ENCODE measurements at regions of chr12 and their contacts with region 1.

Region 1: DNA sequence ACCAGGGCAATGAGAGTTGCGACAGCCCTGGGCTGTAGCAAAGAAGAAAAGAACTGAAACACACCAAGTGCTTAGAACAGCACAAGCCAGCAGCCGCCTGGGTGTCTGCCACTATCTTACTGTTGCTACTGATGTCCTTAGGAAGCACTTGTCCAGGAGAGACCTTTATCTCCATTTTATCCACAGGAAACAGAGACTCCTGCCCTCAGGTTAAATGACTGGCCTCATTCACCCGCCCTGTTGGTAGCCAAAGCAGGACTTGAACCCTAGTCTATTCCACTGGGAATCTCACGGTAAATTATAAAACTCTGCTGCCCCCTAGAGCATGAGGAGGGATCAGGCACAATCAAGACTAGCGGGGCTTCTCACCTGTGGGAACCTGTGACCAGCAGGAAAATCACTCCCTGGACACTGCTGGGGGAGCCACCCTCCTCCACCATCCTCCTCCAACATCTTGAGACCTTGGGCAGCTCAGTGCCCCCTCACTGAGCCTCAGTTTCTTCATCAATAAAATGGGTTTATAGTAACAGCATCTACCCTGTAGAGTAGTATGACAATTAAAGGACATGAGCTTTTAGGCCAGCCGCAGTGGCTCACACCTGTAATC is 20.5 kb upstream of the TESC start:
- DNase-seq: peak; percentile 67
- CTCF ChIP-seq: peak; percentile 82

Region 2: GRCh38 chr12:116266168-116266601 is 853.5 kb before region 1 on chr12:
- in situ Hi-C with region 1: loop called (anchors 25 kb)
- DNase-seq: no peak
- CTCF ChIP-seq: no peak

Region 3: GRCh38 chr12:116703214-116703795 is 416.4 kb before region 1 on chr12:
- in situ Hi-C with region 1: loop called (anchors 25 kb)
- DNase-seq: peak; percentile 65
- CTCF ChIP-seq: peak; percentile 91

Region 4: GRCh38 chr12:116832353-116832752 is 287.3 kb before region 1 on chr12:
- in situ Hi-C with region 1: no loop called
- DNase-seq: no peak
- CTCF ChIP-seq: no peak

Region 5: GRCh38 chr12:116849216-116849615 is 270.5 kb before region 1 on chr12:
- in situ Hi-C with region 1: no loop called
- DNase-seq: no peak
- CTCF ChIP-seq: no peak

Region 6: GRCh38 chr12:117025481-117026151 is 94.1 kb before region 1 on chr12:
- in situ Hi-C with region 1: loop called (anchors 10 kb)
- DNase-seq: peak; percentile 77
- CTCF ChIP-seq: peak; percentile 87

Region 7: GRCh38 chr12:117212563-117213190 is 93.0 kb after region 1 on chr12:
- in situ Hi-C with region 1: no loop called
- DNase-seq: peak; percentile 80
- CTCF ChIP-seq: peak; percentile 86